PC-3 (cell line): ENCODE measurements at regions of chr11 and their contacts with region 1.

Region 1: GRCh38 chr11:95764267-95764898 is 25.2 kb downstream of the FAM76B start:
- DNase-seq: peak; percentile 76
- ATAC-seq: peak; percentile 85
- H3K4me3 ChIP-seq: no peak overlapping the region
- H3K27ac ChIP-seq: no peak overlapping the region
- H3K4me1 ChIP-seq: no peaks in the 10 kb centered on the region
- H3K27me3 ChIP-seq: peaks cover 23% of the 10 kb centered on the region
- CTCF ChIP-seq: peak; percentile 86

Region 2: DNA sequence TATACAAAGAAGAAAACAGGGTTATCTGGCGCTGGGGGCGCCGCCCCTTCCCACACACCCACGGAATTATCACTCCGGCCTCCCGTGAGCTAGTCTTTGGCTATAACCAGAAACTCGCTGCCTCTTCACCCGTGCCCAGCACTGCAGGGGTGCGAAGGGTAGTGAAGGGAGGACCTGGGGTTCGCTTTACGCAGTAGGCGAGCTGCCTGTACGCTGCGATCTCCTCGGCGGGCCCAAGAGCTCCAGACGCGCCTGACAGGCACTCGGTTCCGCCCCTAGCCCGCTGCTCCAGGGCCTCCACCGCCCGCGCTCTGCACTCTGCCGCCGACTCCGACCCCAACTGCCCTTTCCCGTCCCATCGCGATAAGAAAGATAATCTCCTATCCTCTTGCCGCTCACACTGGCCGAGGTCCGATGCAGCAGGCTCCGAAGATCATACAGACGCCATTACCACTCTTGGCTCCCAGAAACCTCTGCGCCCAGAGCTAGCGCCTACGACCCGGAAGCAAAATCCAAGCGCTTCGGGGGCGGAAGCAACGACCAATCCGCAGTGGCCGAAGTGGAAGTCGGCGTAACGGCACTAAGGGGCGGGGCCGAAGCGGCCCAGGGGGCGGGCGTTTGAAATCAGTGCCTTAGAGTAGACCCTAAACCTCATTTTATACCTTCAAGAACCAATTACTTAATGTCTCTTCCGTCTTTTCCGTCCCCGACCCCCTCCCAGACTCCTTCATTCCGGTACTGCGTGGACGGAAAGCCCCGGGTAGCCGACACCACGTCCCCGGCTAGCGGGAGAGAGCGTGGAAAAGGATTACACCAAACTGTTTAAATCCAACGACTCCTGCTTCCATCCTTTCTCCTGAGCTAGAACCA is 791.0 kb before region 1 on chr11 and contains the starts of genes CWC15 and KDM4D:
- CTCF ChIA-PET with region 1: no interaction called
- POLR2A ChIA-PET with region 1: no interaction called
- intact Hi-C with region 1: loop called (anchors 10 kb)
- DNase-seq: peak; percentile 98
- ATAC-seq: peak; percentile 99
- H3K4me3 ChIP-seq: peak within 1 kb of the TSS; percentile 83
- H3K27ac ChIP-seq: peak within 1 kb of the TSS; percentile 13; the same call in 1 of the 2 replicates
- H3K4me1 ChIP-seq: peaks cover 21% of the 10 kb centered on the region
- H3K27me3 ChIP-seq: no peaks in the 10 kb centered on the region
- CTCF ChIP-seq: no peak
- total RNA-seq, gene CWC15: 56.9 and 63.5 TPM in 2 replicates
- total RNA-seq, gene KDM4D: 2.7 and 4.1 TPM in 2 replicates

Region 3: DNA sequence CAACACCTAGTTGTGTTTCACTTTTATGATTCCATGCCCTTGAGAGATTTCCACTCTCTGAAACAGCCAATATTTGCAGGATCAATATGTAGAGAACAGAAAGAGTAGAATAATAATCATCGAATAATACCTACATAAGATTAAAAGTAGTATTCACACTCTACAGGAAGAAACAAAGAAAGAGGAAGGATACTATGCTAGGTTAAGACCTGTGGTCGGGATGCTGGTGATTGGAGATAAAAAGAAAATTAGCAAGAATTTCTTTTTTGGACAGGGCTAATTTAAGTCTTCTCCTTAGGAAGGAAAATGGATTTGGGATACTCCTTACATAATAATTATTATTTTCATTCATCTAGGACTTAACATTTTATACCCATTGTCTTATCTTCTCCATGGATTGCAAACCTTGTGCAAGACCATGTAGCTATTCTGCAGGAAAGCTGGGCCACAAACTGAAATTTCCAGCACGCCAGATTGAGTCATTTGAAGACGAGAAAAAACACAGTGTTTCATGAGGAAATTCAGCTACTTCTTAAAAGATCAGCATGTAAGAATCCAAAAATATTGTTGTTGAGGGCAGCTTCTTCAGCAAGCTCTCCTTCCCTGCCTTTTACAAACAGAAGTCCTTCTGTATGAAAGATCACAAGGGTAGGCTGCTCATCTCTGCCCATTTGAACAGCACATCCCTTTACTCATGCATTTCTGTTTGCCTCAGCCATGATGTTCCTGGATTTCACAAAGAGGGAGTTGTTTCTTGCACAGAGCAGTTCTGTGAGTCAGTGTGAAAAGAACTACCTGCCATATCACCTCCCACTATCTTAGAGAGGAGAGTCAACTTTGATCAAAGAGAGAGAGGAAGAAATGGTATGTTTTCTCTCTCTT is 65.5 kb before region 1 on chr11:
- CTCF ChIA-PET with region 1: no interaction called
- POLR2A ChIA-PET with region 1: no interaction called
- intact Hi-C with region 1: no loop called
- DNase-seq: no peak
- ATAC-seq: no peak
- H3K4me3 ChIP-seq: no peak overlapping the region
- H3K27ac ChIP-seq: no peak overlapping the region
- H3K4me1 ChIP-seq: no peaks in the 10 kb centered on the region
- H3K27me3 ChIP-seq: peaks cover 21% of the 10 kb centered on the region; the same call in 1 of the 2 replicates
- CTCF ChIP-seq: no peak